CD4-positive, alpha-beta memory T cell (primary cell): ENCODE measurements at regions of chr9 and their contacts with region 1.

Region 1: GRCh38 chr9:33473643-33474352 is at the start of gene NOL6:
- DNase-seq: peak; percentile 98 to 99 (median 98)
- H3K4me3 ChIP-seq: peak within 1 kb of the TSS; percentile 80 to 93
- H3K4me3 Mint-ChIP-seq: peak within 1 kb of the TSS; percentile 95 to 100 (median 99)
- H3K27ac ChIP-seq: peak within 1 kb of the TSS; percentile 62
- H3K27ac Mint-ChIP-seq: peak within 1 kb of the TSS; percentile 90 to 100 (median 97)
- H3K4me1 ChIP-seq: peaks cover 27% of the 10 kb centered on the region
- H3K4me1 Mint-ChIP-seq: peaks cover 11 to 36% (median 28%) of the 10 kb centered on the region in 4 donors
- H3K27me3 ChIP-seq: no peaks in the 10 kb centered on the region
- H3K27me3 Mint-ChIP-seq: no peaks in the 10 kb centered on the region
- total RNA-seq, gene NOL6: 39.1 to 41.1 TPM

Region 2: DNA sequence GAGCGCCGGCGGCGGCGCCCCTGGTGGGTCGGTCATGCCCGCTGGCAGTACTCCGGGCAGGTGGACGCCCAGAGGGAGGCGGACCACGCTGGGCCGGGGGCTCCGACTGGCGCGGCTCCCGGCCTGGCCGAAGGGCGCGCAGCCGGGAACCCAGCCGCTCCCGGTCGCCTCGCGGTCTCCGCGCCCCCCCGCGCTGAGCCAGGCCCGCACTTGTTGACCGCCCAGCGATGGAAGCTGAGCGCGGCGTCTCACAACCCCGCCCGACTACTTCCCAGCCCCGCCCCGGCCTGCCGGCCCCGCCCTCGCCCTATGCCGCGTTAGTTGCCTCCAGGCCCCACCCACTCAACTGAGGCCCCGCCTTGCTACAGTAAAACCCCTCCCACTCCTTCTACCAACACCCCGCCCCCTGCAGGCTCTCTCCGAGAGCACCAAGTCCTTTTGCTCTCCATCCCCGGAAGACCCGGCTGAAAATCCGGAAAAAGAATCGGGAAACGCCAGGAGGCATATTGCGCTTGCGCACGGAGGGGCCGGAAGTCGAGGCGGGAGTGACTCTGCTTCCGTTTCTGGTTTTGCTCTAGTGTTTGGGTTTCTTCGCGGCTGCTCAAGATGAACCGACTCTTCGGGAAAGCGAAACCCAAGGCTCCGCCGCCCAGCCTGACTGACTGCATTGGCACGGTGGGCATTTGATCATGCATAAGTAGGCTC is 209.2 kb before region 1 on chr9 and contains the starts of genes BAG1 and CHMP5:
- CTCF ChIA-PET with region 1: no interaction called
- POLR2A ChIA-PET with region 1: interaction called, 3 read pairs
- intact Hi-C with region 1: loop called (anchors 1 kb)
- DNase-seq: peak; percentile 99 to 100 (median 100)
- H3K4me3 ChIP-seq: peak within 1 kb of the TSS; percentile 71 to 85
- H3K4me3 Mint-ChIP-seq: peak within 1 kb of the TSS; percentile 95 to 100 (median 97)
- H3K27ac ChIP-seq: peak within 1 kb of the TSS; percentile 76
- H3K27ac Mint-ChIP-seq: peak within 1 kb of the TSS; percentile 90 to 99 (median 98)
- H3K4me1 ChIP-seq: peaks cover 38% of the 10 kb centered on the region
- H3K4me1 Mint-ChIP-seq: peaks cover 38 to 53% (median 44%) of the 10 kb centered on the region in 4 donors
- H3K27me3 ChIP-seq: no peaks in the 10 kb centered on the region
- H3K27me3 Mint-ChIP-seq: no peaks in the 10 kb centered on the region
- total RNA-seq, gene BAG1: 53.5 to 56.3 TPM
- total RNA-seq, gene CHMP5: 32.3 to 35.0 TPM

Region 3: DNA sequence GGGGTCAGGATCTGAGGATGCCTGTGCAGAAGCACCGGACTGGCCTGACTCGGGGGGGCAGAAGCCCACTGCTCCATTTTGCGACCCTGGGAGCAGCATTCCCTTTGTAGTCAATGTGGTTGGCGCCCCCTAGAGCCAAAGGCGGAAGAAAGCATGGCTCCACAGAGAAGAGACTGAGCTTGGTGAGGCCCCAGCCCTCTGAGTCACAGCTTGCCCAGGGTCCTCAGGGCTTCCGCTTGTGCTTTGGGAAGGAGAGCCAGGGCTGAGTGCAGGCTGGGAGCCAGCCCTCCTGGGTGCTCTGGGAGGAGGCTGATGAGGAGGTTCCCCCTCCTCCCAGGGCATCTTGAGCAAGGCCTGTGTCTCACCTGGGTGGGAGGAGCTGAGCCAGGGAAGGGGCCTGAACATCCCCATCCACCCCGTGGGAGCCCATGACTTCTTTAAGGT is 20.9 kb before region 1 on chr9:
- CTCF ChIA-PET with region 1: interaction called, 562 read pairs
- POLR2A ChIA-PET with region 1: interaction called, 77 read pairs
- intact Hi-C with region 1: loop called (anchors 1 kb)
- DNase-seq: peak; percentile 24 to 50 (median 40)
- H3K4me3 ChIP-seq: no peak overlapping the region
- H3K4me3 Mint-ChIP-seq: peak overlapping the region in 7 of 8 donors; percentile 3 to 65 (median 32)
- H3K27ac ChIP-seq: peak overlapping the region; percentile 36
- H3K27ac Mint-ChIP-seq: peak overlapping the region; percentile 55 to 87 (median 83)
- H3K4me1 ChIP-seq: peaks cover 69% of the 10 kb centered on the region
- H3K4me1 Mint-ChIP-seq: peaks cover 43 to 70% (median 57%) of the 10 kb centered on the region in 4 donors
- H3K27me3 ChIP-seq: no peaks in the 10 kb centered on the region
- H3K27me3 Mint-ChIP-seq: no peaks in the 10 kb centered on the region

Region 4: DNA sequence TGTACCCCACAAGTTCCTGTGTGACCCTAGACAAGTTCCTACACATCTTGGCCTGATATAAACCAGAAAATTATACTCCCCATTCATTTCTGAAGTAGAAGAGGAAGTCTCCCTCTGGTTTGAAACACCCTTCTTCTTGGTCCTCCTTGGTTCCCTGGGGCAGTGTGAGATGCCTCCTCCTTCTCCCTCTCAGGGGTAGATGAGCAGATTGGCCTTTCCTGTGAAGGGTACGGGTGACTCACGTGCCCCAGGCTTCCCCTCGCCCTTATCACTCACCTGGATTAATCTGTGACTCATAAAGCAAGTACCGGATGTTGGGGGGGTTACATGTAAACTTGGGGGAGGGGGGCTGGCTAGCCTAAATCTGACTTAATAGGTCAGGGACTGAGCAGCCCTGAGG is 15.4 kb before region 1 on chr9:
- CTCF ChIA-PET with region 1: interaction called, 562 read pairs
- POLR2A ChIA-PET with region 1: interaction called, 77 read pairs
- intact Hi-C with region 1: loop called (anchors 1 kb)
- DNase-seq: peak; percentile 53 to 91 (median 56)
- H3K4me3 ChIP-seq: peak overlapping the region in 1 of 2 donors; percentile 4
- H3K4me3 Mint-ChIP-seq: peak overlapping the region in 7 of 8 donors; percentile 42 to 87 (median 63)
- H3K27ac ChIP-seq: peak overlapping the region; percentile 58
- H3K27ac Mint-ChIP-seq: peak overlapping the region; percentile 88 to 98 (median 94)
- H3K4me1 ChIP-seq: peaks cover 58% of the 10 kb centered on the region
- H3K4me1 Mint-ChIP-seq: peaks cover 36 to 64% (median 53%) of the 10 kb centered on the region in 4 donors
- H3K27me3 ChIP-seq: no peaks in the 10 kb centered on the region
- H3K27me3 Mint-ChIP-seq: no peaks in the 10 kb centered on the region

Region 5: DNA sequence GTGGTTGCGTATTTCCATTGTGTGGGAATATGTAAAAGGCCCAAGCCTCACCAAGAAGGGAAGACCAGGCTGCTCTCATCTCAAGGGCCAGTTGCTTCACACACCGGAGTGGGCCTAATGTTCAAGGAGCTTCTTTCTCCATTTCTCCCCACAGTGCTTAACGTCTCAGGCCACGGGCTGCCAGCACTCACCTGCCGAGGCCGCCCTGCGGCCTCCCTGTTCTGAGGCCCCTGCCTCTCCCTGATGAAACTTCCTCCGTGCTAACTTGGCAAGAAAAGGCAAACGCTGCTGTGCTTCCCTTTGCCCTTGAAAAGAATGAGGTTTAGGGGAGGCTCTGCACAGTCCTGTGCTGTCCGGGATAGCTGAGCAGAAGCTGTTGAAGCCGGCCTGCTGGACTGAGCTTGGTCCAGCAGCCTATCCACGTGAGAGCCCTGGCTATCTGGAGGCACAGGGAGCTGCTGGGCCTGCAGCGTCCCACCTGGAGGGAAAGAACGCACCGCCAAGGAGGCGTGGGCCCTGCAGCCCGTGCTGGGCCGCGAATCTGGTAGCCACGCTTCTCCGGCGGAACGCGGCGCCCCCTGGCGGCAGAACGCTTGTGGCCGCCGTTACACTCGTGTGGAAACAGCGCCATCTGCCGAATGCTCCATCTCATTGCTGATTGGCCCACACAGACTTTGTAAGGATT is 248.0 kb after region 1 on chr9:
- CTCF ChIA-PET with region 1: no interaction called
- POLR2A ChIA-PET with region 1: no interaction called
- intact Hi-C with region 1: loop called (anchors 10 kb)
- DNase-seq: peak; percentile 79 to 85 (median 84)
- H3K4me3 ChIP-seq: no peak overlapping the region
- H3K4me3 Mint-ChIP-seq: peak overlapping the region in 1 of 8 donors; percentile 27
- H3K27ac ChIP-seq: no peak overlapping the region
- H3K27ac Mint-ChIP-seq: peak overlapping the region in 1 of 7 donors; percentile 63
- H3K4me1 ChIP-seq: no peaks in the 10 kb centered on the region
- H3K4me1 Mint-ChIP-seq: peaks cover 0 to 11% (median under 1%) of the 10 kb centered on the region in 4 donors
- H3K27me3 ChIP-seq: no peaks in the 10 kb centered on the region
- H3K27me3 Mint-ChIP-seq: peaks cover 6 to 7% of the 10 kb centered on the region in 2 donors